Tibial artery (tissue), 4 donors: ENCODE measurements at regions of chr1 and their contacts with region 1.

Region 1: GRCh38 chr1:244796718-244797406 is 38.6 kb upstream of the COX20 start:
- DNase-seq: peak; percentile 73
- H3K4me3 ChIP-seq: no peak overlapping the region
- H3K27ac ChIP-seq: no peak overlapping the region
- H3K4me1 ChIP-seq: peaks cover 0 to 10% (median 0%) of the 10 kb centered on the region in 4 donors
- H3K27me3 ChIP-seq: no peaks in the 10 kb centered on the region
- CTCF ChIP-seq: peak; percentile 83 to 88

Region 2: GRCh38 chr1:244599937-244600350 is 196.9 kb before region 1 on chr1:
- intact Hi-C with region 1: loop called (anchors 1 kb)
- DNase-seq: peak in 1 of 2 donors; percentile 35
- H3K4me3 ChIP-seq: peak overlapping the region in 1 of 2 donors; percentile 12
- H3K27ac ChIP-seq: peak overlapping the region; percentile 47 to 56
- H3K4me1 ChIP-seq: peaks cover 0 to 5% (median 0%) of the 10 kb centered on the region in 4 donors
- H3K27me3 ChIP-seq: no peaks in the 10 kb centered on the region
- CTCF ChIP-seq: no peak

Region 3: DNA sequence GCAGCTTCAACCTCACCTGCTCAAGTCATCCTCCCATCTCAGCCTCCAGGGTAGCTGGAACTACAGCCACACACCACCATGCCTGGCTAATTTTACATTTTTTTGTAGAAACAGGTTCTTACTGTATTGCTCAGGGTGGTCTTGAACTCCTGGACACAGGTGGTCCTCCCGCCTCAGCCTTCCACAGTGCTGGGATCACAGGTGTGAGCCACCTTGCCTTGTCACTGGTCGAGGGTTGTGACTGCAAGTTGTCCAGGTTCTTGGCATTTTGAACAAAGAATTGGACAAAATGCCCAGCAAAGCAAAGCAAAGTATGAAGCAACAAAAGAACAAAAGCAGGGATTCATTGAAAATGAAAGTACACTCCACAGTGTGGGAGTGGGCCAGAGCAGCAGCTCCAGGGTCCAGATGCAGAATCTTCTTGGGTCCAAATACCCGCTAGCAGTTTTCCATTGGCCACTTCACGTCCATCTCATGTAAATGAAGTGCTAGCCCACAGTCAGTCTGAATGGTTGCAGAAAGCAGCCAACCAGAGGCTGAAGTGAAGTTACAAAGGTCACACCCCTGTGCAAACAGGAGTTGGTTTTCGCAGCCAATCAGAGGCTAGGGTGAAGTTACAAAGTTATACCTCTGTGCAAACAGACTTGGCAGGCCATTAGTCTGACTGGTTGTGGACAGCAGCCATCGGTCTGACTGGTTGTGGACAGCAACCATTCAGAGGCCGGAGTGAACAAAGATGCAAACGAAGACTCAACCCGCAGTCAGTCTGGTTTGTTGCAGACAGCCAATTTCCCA is 248.4 kb after region 1 on chr1:
- intact Hi-C with region 1: loop called (anchors 10 kb)
- DNase-seq: no peak
- H3K4me3 ChIP-seq: no peak overlapping the region
- H3K27ac ChIP-seq: no peak overlapping the region
- H3K4me1 ChIP-seq: peaks cover 0 to 10% (median 0%) of the 10 kb centered on the region in 4 donors
- H3K27me3 ChIP-seq: no peaks in the 10 kb centered on the region
- CTCF ChIP-seq: no peak